HepG2 (cell line): ENCODE measurements at regions of chr2 and their contacts with region 1.

Region 1: DNA sequence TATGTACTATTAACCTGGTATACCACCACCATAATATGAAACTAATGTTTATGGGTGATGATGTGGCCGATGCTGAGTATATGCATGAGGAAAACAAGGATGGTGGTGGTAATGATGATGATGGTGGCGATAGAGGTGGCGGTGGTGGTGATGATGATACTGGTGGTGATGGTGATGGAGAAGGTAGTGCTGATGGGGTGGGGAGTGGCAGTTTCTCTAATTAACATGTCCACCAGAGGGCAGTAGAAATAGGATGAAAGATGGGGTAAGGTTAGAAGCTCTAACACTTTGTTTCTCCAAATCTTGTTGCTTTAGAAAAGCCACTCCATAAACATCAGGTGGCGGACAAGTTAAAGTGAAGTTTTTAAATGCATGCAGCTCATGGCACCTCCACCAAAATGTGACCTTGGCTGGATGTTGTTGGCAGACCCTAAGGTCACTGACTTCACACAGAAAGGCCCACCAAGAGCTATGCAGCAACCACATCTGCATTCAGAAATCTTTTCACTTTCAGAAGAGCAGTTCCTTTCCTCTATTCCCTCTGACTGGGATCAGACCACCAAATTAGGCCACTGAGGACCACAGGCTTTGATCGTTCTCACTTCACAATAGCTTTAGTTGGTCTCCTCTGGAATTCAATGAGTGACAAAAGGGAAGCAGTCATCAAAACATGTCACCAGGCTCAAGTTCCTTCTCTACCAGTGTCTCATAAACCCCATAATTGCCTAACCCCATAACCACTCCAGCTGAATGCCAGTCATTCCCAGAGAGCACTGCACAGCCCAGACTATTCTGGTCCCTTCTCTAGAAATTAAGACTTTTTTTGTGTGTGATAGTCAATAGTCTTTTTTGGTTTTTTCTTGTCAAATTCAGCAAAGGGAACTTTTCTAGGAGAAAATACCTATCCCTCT is 7.5 kb upstream of the BCL11A start:
- DNase-seq: peak; percentile 36
- ATAC-seq: peak; percentile 93
- H3K4me3 ChIP-seq: no peak overlapping the region
- H3K27ac ChIP-seq: no peak overlapping the region
- H3K4me1 ChIP-seq: no peaks in the 10 kb centered on the region
- H3K27me3 ChIP-seq: peaks cover 0 to 16% of the 10 kb centered on the region in 2 experiments; a peak in 3 of 5 replicates
- CTCF ChIP-seq: peak; percentile 52
- EP300 ChIP-seq: no peak
- POLR2A ChIP-seq: no peak
- RAD21 ChIP-seq: no peak

Region 2: DNA sequence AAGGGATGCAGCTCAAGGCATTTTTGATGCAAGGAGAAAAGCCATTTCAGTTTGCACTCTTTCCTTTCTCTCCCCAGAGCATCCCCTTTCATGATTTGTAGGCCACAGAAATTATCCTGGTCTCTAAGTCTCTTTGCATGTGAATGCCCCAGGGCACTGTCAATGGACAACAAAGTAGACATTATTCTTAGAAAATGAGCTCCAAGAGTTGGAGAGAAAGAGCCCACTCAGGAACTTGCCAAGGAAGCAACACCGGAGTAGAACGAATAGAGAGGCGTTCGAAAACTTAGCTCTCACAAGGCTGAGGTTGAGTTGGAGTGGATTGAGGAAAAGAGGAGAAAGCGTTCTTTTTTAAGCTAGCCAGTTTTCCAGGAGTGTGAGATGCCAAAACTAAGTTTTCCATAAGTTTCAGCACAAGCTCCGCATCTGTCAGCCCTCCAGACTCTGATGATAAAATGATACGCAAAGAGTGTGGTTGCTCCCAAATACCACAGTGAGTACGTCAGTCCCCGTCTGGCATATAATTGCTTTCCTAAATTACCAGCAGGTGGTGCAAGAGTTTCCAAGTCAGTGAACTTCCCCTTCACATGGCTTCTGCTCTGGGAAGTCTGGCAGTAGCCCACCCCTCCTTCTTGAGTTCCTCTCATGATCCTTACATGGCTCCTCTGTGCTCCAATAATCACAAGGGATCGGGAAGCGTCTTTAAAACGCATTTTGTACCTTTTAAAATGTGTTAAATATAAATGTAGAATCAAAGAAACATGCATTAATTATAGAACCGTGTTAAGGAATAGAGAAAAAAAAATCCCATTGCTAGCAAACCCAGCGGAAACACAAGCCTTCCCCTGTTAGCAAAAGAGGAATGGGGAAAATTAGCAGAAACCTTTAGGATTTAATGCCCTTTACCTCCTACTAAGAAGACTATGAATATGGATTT is 1259.3 kb before region 1 on chr2:
- CTCF ChIA-PET with region 1: no interaction called
- POLR2A ChIA-PET with region 1: no interaction called
- in situ Hi-C with region 1: no loop called
- intact Hi-C with region 1: loop called (anchors 5 kb)
- DNase-seq: peak; percentile 67
- ATAC-seq: peak; percentile 97
- H3K4me3 ChIP-seq: no peak overlapping the region
- H3K27ac ChIP-seq: no peak overlapping the region
- H3K4me1 ChIP-seq: no peaks in the 10 kb centered on the region
- H3K27me3 ChIP-seq: no peaks in the 10 kb centered on the region
- CTCF ChIP-seq: peak; percentile 75
- EP300 ChIP-seq: no peak
- POLR2A ChIP-seq: no peak
- RAD21 ChIP-seq: peak; percentile 32; the same call in 1 of the 2 replicates

Region 3: GRCh38 chr2:60674524-60675165 is 113.7 kb after region 1 on chr2:
- CTCF ChIA-PET with region 1: interaction called, 3 read pairs
- POLR2A ChIA-PET with region 1: no interaction called
- in situ Hi-C with region 1: no loop called
- intact Hi-C with region 1: loop called (anchors 1 kb)
- DNase-seq: peak; percentile 71
- ATAC-seq: peak; percentile 100
- H3K4me3 ChIP-seq: no peak overlapping the region
- H3K27ac ChIP-seq: no peak overlapping the region
- H3K4me1 ChIP-seq: no peaks in the 10 kb centered on the region
- H3K27me3 ChIP-seq: peaks cover 0 to 10% of the 10 kb centered on the region in 2 experiments; a peak in 2 of 5 replicates
- CTCF ChIP-seq: peak; percentile 98
- EP300 ChIP-seq: no peak
- POLR2A ChIP-seq: no peak
- RAD21 ChIP-seq: peak; percentile 60

Region 4: DNA sequence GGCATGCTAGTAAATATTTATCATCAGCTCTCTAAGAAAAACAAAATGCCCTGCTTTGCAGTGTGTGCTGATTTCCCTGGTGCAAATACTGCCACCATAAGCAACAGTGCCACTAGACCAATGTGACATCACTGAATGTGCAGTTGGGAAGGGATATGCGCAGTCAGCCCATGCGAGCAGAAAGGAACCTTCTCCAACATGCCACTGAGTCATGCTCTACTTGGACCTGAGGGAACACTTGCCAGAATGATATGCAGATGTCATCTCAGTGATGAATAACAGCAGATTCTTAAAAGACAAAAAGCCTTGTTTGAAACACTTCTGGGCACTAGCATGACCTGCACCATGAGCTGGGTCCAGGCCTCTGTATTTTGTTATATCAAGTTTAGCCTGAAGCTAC is 265.1 kb after region 1 on chr2:
- CTCF ChIA-PET with region 1: no interaction called
- POLR2A ChIA-PET with region 1: no interaction called
- in situ Hi-C with region 1: no loop called
- intact Hi-C with region 1: no loop called
- DNase-seq: no peak
- ATAC-seq: no peak
- H3K4me3 ChIP-seq: no peak overlapping the region
- H3K27ac ChIP-seq: no peak overlapping the region
- H3K4me1 ChIP-seq: no peaks in the 10 kb centered on the region
- H3K27me3 ChIP-seq: peaks cover 0 to 4% of the 10 kb centered on the region in 2 experiments; a peak in 1 of 5 replicates
- CTCF ChIP-seq: no peak
- EP300 ChIP-seq: no peak
- POLR2A ChIP-seq: no peak
- RAD21 ChIP-seq: no peak